ENCODE measurements at regions of chr19 and their contacts with region 1.

Region 1: DNA sequence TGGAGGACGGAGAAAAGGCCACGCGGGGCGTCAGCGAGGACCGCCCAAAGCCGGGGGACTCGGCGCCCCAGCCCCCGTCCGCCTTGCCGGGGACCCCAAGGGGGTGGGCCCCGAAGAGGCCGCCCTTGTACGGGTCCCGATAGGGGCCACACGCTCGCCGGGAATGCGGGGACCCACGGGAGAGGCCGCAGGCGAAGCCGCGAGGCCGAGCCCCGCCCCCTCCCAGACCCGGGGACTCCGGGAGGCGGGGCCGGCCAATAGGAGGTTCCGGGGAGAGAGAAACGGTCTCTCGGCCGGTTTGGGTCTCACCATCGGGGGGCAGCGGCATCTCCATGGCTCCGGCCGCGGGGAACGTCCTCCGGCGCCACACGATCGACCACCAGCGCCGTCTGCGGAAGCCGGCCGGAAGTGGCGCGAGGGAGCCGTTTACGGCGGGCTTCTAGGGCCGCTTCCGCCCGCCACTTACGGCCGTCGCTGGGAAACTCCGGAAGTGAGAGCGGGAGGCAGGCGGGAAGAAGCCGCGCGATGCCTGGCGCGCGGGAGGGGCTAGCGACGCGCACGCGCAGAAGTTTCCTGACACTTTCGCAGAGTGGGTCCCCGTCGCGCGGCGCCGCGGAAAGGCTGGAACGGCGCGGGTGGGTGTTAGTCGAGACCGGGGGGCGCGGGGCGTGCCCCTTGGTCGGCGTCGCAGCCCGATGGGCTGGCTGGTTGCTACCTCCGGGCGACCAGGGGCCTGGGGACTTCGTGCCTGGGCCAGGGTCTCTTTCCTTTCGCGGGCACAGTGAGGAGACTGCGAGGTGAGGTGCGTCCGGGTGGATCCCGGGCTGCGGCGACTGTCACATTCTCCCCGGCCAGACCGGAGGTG is at the start of gene CHERP:
- DNase-seq: peak; percentile 93
- H3K4me3 Mint-ChIP-seq: peak within 1 kb of the TSS; percentile 99
- H3K27ac Mint-ChIP-seq: peak within 1 kb of the TSS; percentile 95
- H3K4me1 Mint-ChIP-seq: peaks cover 28% of the 10 kb centered on the region
- H3K27me3 Mint-ChIP-seq: no peaks in the 10 kb centered on the region
- total RNA-seq, gene CHERP: 79.1 and 82.3 TPM in 2 replicates

Region 2: DNA sequence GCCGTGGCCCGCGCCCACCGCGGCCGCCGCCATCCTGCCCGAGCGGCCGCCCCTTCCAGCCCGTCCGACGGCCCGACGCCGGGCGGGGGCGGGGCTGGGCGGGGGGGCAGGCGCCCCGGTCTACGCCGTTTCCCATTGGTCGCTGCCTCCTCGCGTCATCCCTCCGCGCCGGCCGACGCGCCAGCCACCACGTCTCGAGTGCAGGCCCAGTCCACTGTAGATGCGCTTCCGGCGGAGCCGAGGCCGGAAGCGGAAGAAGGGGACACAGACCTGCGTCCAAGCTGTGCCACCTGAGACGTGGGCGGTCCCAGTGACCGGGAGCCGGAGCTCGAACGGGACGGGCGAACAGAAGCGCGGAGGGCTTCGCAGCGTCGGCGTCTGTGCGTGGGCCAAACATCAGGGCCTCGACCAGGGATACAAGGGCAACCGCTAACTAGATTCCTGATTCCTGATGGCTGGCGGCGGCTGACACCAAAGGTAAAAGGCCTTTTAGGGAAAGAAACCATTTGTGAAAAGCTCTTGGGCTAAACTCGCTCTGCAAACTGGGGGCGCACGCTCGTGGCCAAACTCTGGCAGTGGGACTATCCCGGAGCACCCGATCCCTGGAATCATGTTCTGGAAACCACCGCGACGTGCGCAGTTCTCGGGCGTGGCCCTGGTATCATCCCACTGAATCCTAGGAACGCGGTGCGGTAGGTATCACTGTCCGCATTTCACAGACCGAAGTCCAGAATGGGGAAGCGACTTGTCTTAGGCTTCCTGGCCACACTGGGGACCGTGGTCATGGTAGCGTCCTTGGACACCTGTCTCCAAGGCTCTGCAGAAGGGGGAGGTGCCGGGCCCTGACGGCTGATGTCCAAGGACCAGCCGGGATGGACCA is 30.3 kb after region 1 on chr19 and contains the start of gene SLC35E1:
- intact Hi-C with region 1: loop called (anchors 1 kb)
- DNase-seq: peak; percentile 92
- H3K4me3 Mint-ChIP-seq: peak within 1 kb of the TSS; percentile 97
- H3K27ac Mint-ChIP-seq: peak within 1 kb of the TSS; percentile 93
- H3K4me1 Mint-ChIP-seq: peaks cover 39% of the 10 kb centered on the region
- H3K27me3 Mint-ChIP-seq: no peaks in the 10 kb centered on the region
- total RNA-seq, gene SLC35E1: 55.3 and 56.0 TPM in 2 replicates

Region 3: DNA sequence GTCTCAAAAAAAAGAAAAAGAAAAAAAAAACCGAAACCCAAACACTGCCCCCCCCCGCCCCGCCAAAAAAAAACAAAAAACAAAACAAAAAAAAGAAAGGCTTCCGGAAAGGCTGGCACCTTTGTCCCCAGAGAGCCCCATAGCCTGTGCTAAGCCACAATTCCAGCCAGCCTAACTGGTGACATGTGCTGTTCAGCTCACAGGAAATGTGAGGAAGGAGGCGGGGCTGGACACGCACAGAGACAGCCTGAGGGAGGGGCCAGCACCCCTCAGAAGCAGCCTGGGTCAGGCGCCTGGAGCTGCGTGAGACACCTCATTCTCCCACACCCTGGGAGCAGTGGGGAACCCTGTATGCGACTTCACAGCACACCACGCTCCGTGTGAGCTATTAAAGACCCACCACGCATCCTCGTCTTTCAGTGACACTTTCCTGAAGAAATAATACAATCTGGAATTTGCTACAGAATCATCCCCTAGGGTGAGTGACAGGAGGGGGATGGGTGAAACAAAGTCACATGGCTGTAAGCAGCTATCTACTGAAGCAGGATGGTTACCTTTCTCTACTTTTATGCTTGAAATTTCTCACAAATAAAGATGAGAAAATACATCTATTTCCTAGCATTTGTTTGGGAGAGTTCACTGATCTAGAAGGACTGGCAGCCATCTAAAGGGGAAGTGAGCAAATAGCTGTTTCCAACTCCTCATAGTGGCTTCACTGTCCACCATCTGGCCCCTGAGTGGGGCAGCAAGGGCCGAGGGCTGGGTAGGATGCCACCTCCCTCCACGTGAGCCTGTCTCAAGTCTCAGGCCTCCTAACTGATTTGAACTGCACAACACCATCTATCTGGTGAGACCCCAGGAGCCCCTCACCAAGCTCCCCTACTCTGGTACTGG is 42.2 kb after region 1 on chr19:
- intact Hi-C with region 1: loop called (anchors 1 kb)
- DNase-seq: peak; percentile 88
- H3K4me3 Mint-ChIP-seq: peak overlapping the region; percentile 77
- H3K27ac Mint-ChIP-seq: peak overlapping the region; percentile 90
- H3K4me1 Mint-ChIP-seq: peaks cover 66% of the 10 kb centered on the region
- H3K27me3 Mint-ChIP-seq: no peaks in the 10 kb centered on the region

Region 4: DNA sequence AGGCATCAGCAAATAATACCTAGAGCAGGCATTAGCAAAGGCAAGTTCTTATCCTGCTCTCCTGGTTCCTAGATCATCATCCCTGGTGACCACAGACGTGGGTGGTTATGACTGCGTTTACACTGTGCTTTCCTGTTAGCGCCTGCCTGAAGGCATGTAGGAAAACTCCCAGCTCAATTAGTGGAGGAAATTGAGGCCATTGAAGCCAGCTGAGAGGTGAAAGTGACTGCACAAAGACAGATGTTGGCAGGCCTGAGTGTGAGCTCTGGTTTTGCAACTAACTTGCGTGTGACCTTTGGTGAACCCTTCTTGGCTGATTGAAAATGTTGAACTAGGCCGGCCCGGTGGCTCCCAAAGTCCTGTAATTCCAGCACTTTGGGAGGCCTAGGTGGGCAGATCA is 159.8 kb after region 1 on chr19:
- intact Hi-C with region 1: no loop called
- DNase-seq: no peak
- H3K4me3 Mint-ChIP-seq: no peak overlapping the region
- H3K27ac Mint-ChIP-seq: no peak overlapping the region
- H3K4me1 Mint-ChIP-seq: no peaks in the 10 kb centered on the region
- H3K27me3 Mint-ChIP-seq: no peaks in the 10 kb centered on the region